ENCODE measurements at regions of chr5 and their contacts with region 1.

Region 1: GRCh38 chr5:127492854-127493738 is 24.3 kb upstream of the PRRC1 start:
- DNase-seq: no peak
- ATAC-seq: peak; percentile 53
- H3K4me3 Mint-ChIP-seq: no peak overlapping the region
- H3K27ac Mint-ChIP-seq: no peak overlapping the region
- H3K4me1 Mint-ChIP-seq: no peaks in the 10 kb centered on the region
- H3K27me3 Mint-ChIP-seq: peaks cover 21% of the 10 kb centered on the region
- CTCF ChIP-seq: peak; percentile 98

Region 2: GRCh38 chr5:126656396-126657007 is 836.6 kb before region 1 on chr5:
- CTCF ChIA-PET with region 1: interaction called, 5 read pairs
- POLR2A ChIA-PET with region 1: no interaction called
- intact Hi-C with region 1: loop called (anchors 10 kb)
- DNase-seq: peak; percentile 41
- ATAC-seq: no peak
- H3K4me3 Mint-ChIP-seq: no peak overlapping the region
- H3K27ac Mint-ChIP-seq: no peak overlapping the region
- H3K4me1 Mint-ChIP-seq: no peaks in the 10 kb centered on the region
- H3K27me3 Mint-ChIP-seq: no peaks in the 10 kb centered on the region
- CTCF ChIP-seq: peak; percentile 85

Region 3: GRCh38 chr5:127001621-127002296 is 491.3 kb before region 1 on chr5:
- CTCF ChIA-PET with region 1: no interaction called
- POLR2A ChIA-PET with region 1: no interaction called
- intact Hi-C with region 1: no loop called
- DNase-seq: no peak
- ATAC-seq: no peak
- H3K4me3 Mint-ChIP-seq: no peak overlapping the region
- H3K27ac Mint-ChIP-seq: no peak overlapping the region
- H3K4me1 Mint-ChIP-seq: no peaks in the 10 kb centered on the region
- H3K27me3 Mint-ChIP-seq: no peaks in the 10 kb centered on the region
- CTCF ChIP-seq: no peak

Region 4: GRCh38 chr5:127290019-127290945 is 202.8 kb before region 1 on chr5 and contains the start of gene MEGF10:
- CTCF ChIA-PET with region 1: interaction called, 6 read pairs
- POLR2A ChIA-PET with region 1: no interaction called
- intact Hi-C with region 1: loop called (anchors 2 kb)
- DNase-seq: peak; percentile 44
- ATAC-seq: peak; percentile 39
- H3K4me3 Mint-ChIP-seq: peak within 1 kb of the TSS; percentile 32
- H3K27ac Mint-ChIP-seq: no peak within 1 kb of the TSS
- H3K4me1 Mint-ChIP-seq: peaks cover 11% of the 10 kb centered on the region
- H3K27me3 Mint-ChIP-seq: peaks cover 62% of the 10 kb centered on the region
- CTCF ChIP-seq: peak; percentile 56
- total RNA-seq, gene MEGF10: not detected

Region 5: GRCh38 chr5:127471211-127471610 is 21.9 kb before region 1 on chr5:
- CTCF ChIA-PET with region 1: interaction called, 10 read pairs
- POLR2A ChIA-PET with region 1: no interaction called
- intact Hi-C with region 1: no loop called
- DNase-seq: no peak
- ATAC-seq: no peak
- H3K4me3 Mint-ChIP-seq: no peak overlapping the region
- H3K27ac Mint-ChIP-seq: no peak overlapping the region
- H3K4me1 Mint-ChIP-seq: no peaks in the 10 kb centered on the region
- H3K27me3 Mint-ChIP-seq: peaks cover 4% of the 10 kb centered on the region
- CTCF ChIP-seq: no peak

Region 6: GRCh38 chr5:127505905-127506304 is 12.8 kb after region 1 on chr5:
- CTCF ChIA-PET with region 1: interaction called, 25 read pairs
- POLR2A ChIA-PET with region 1: interaction called, 3 read pairs
- intact Hi-C with region 1: no loop called
- DNase-seq: no peak
- ATAC-seq: no peak
- H3K4me3 Mint-ChIP-seq: no peak overlapping the region
- H3K27ac Mint-ChIP-seq: no peak overlapping the region
- H3K4me1 Mint-ChIP-seq: no peaks in the 10 kb centered on the region
- H3K27me3 Mint-ChIP-seq: peaks cover 3% of the 10 kb centered on the region
- CTCF ChIP-seq: no peak

Region 7: GRCh38 chr5:127515693-127516395 is 22.7 kb after region 1 on chr5:
- CTCF ChIA-PET with region 1: interaction called, 17 read pairs
- POLR2A ChIA-PET with region 1: no interaction called
- intact Hi-C with region 1: no loop called
- DNase-seq: no peak
- ATAC-seq: no peak
- H3K4me3 Mint-ChIP-seq: no peak overlapping the region
- H3K27ac Mint-ChIP-seq: no peak overlapping the region
- H3K4me1 Mint-ChIP-seq: peaks cover 26% of the 10 kb centered on the region
- H3K27me3 Mint-ChIP-seq: peaks cover 8% of the 10 kb centered on the region
- CTCF ChIP-seq: no peak

Measured in activated CD8-positive, alpha-beta T cell treated with anti-CD3 and anti-CD28 coated beads for 36 hours (primary cell).